ENCODE measurements at regions of chr2 and their contacts with region 1.

Region 1: DNA sequence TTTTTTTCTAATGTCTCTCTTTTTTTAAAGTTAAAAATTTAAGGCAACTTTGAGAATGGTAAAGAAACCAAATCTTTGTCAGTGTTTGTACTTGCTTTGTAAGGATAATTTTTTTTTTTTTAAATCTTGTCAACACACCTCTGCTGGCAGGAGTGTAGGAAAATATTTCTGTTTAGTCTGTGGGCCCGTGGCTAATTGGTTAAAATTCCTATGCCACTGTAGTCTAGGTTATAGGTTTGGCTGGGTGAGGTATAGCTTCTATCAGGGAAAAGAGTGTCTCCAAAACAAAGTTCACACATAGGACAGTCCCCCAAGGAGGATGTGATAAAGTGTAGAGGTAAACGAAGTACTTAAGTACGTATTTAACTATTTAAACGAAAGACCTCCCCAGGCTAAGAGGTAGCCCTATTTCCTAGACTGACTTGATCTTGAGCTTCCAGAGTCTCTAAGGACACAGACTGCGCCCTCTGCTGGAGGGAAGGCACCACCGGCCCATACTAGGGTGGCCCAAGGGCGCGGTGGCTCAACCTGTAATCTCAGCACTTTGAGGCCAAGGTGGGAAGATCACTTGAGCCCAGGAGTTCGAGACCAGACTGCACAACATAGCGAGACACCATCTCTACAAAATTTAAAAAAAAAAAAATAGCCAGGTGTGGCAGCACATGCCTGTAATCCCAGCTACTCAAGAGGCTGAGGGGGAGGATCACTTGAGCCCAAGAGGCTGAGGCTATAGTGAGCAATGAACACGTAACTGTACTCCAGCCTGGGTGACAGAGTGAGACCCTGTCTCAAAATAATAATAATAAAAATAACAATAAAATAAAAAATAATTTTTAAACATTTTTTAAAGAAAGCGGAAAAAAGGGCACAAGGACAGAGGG is 8.9 kb downstream of the TEX44 start:
- DNase-seq: peak; percentile 88
- ATAC-seq: peak; percentile 58
- H3K4me3 Mint-ChIP-seq: no peak overlapping the region
- H3K27ac Mint-ChIP-seq: no peak overlapping the region
- H3K4me1 Mint-ChIP-seq: peaks cover 7% of the 10 kb centered on the region
- H3K27me3 Mint-ChIP-seq: peaks cover 5% of the 10 kb centered on the region

Region 2: GRCh38 chr2:231514103-231514950 is 87.3 kb before region 1 on chr2:
- CTCF ChIA-PET with region 1: interaction called, 100 read pairs
- DNase-seq: peak; percentile 99
- ATAC-seq: peak; percentile 99
- H3K4me3 Mint-ChIP-seq: peak overlapping the region; percentile 83
- H3K27ac Mint-ChIP-seq: peak overlapping the region; percentile 94
- H3K4me1 Mint-ChIP-seq: peaks cover 28% of the 10 kb centered on the region
- H3K27me3 Mint-ChIP-seq: peaks cover 12% of the 10 kb centered on the region

Region 3: GRCh38 chr2:231557571-231558237 is 43.9 kb before region 1 on chr2:
- CTCF ChIA-PET with region 1: interaction called, 58 read pairs
- DNase-seq: peak; percentile 85
- ATAC-seq: peak; percentile 96
- H3K4me3 Mint-ChIP-seq: peak overlapping the region; percentile 51
- H3K27ac Mint-ChIP-seq: peak overlapping the region; percentile 78
- H3K4me1 Mint-ChIP-seq: peaks cover 45% of the 10 kb centered on the region
- H3K27me3 Mint-ChIP-seq: peaks cover 3% of the 10 kb centered on the region

Region 4: GRCh38 chr2:231590619-231591018 is 11.0 kb before region 1 on chr2:
- CTCF ChIA-PET with region 1: interaction called, 28 read pairs
- DNase-seq: no peak
- ATAC-seq: no peak
- H3K4me3 Mint-ChIP-seq: no peak overlapping the region
- H3K27ac Mint-ChIP-seq: no peak overlapping the region
- H3K4me1 Mint-ChIP-seq: no peaks in the 10 kb centered on the region
- H3K27me3 Mint-ChIP-seq: peaks cover 2% of the 10 kb centered on the region

Region 5: GRCh38 chr2:231713730-231714430 is 112.3 kb after region 1 on chr2:
- CTCF ChIA-PET with region 1: interaction called, 10 read pairs
- DNase-seq: peak; percentile 94
- ATAC-seq: peak; percentile 29
- H3K4me3 Mint-ChIP-seq: peak overlapping the region; percentile 33
- H3K27ac Mint-ChIP-seq: peak overlapping the region; percentile 90
- H3K4me1 Mint-ChIP-seq: peaks cover 27% of the 10 kb centered on the region
- H3K27me3 Mint-ChIP-seq: no peaks in the 10 kb centered on the region

Region 6: GRCh38 chr2:231800493-231801091 is 199.0 kb after region 1 on chr2:
- CTCF ChIA-PET with region 1: no interaction called
- DNase-seq: peak; percentile 64
- ATAC-seq: peak; percentile 68
- H3K4me3 Mint-ChIP-seq: no peak overlapping the region
- H3K27ac Mint-ChIP-seq: no peak overlapping the region
- H3K4me1 Mint-ChIP-seq: no peaks in the 10 kb centered on the region
- H3K27me3 Mint-ChIP-seq: no peaks in the 10 kb centered on the region